Sigmoid colon (tissue), 7 donors: ENCODE measurements at regions of chr19 and their contacts with region 1.

Region 1: DNA sequence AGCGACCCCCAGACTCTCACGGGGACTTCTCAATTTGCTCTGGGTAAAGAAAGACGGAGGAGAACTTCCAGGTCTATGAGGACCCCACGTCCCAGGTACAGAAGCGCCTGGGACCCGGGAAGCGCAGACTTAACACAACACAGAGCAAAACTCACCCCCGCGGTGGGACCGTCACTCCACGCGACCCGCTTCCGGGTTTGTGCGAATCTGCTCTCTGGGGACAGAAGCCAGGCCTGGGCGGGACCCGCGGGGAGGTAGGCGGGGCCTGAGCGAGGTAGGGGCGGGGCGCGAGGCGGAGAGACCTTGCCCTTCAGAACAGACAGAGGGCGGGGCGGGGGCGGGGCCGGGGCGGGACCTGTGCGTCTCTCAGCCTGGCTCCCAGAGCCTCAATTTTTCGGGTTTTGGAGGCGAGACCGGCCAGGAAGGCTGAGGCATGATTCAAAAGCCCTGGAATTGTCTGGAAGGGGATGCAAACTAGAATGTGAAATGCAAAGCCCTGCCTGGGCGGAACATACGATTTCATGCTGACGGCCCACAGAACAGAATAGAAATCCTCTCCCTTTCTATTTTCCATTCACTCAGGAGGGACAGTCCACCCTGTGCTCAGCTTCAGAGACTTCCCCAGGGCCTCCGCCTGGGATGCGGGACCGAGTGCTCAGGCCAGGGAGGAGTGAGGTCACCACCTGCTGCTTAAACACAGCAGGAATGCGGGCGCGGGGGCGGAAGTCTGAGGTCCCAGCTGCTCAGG is 19.3 kb upstream of the ZNF888 start:
- DNase-seq: peak; percentile 97
- H3K4me3 ChIP-seq: peak overlapping the region; percentile 63 to 81 (median 69)
- H3K27ac ChIP-seq: peak overlapping the region; percentile 84 to 88 (median 86)
- H3K4me1 ChIP-seq: peaks cover 0 to 13% (median 8%) of the 10 kb centered on the region in 4 donors
- H3K27me3 ChIP-seq: no peaks in the 10 kb centered on the region
- CTCF ChIP-seq: no peak
- EP300 ChIP-seq: no peak
- POLR2A ChIP-seq: peak; percentile 76 to 88

Region 2: GRCh38 chr19:52897144-52897935 is 45.2 kb before region 1 on chr19 and contains the start of gene ZNF320:
- intact Hi-C with region 1: loop called (anchors 5 kb)
- DNase-seq: peak; percentile 98
- H3K4me3 ChIP-seq: peak within 1 kb of the TSS; percentile 61 to 81 (median 72)
- H3K27ac ChIP-seq: peak within 1 kb of the TSS; percentile 87 to 96 (median 92)
- H3K4me1 ChIP-seq: peaks cover 0 to 19% (median 17%) of the 10 kb centered on the region in 4 donors
- H3K27me3 ChIP-seq: no peaks in the 10 kb centered on the region
- CTCF ChIP-seq: no peak
- EP300 ChIP-seq: no peak
- POLR2A ChIP-seq: peak; percentile 33 to 73
- total RNA-seq, gene ZNF320: 9.0 to 21.8 (median 15.0) TPM

Region 3: DNA sequence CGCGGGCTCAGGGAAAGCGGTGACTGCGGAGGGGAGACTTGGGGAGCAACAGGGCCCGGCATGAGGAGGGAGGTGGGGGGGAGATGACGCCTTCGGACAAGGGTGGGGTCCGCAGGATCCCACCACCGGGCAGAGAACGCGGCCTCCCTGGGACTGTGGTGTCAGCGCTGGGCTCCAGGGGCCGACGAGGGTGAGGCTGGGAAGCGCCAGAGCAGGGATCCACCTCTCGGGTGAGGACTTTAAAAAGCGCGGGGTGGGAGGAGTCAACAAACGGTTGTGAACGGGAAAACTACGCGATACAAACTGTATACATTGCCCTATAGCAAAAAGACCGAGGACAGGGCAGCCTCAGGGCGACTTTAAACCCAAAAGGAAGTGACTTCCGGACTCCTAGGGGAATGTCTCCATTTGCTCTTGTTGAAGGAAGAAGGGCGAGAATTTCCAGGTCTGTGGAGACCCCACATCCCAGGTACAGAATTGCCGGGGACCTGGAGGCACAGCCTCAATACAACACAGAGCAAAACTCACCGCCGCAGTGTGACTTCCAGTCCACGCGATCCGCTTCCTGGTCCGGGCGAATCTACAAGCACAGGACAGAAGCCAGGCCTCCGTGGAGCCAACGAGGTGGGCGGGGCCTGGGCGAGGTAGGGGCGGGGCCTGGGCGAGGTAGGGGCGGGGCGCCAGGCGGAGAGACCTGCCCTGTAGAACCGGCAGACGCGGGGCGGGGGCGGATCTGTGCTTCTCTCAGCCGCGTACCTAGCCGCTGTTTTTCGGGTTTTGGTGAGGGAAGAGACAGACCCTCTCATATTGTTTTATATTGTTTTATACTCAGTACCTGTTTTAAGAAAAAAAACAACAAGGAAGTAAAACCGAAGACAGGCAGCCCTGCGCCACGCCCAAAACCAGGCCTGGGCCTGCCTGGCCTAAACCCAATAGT is 19.5 kb before region 1 on chr19 and contains the start of gene ZNF888:
- intact Hi-C with region 1: loop called (anchors 1 kb)
- DNase-seq: peak; percentile 94
- H3K4me3 ChIP-seq: peak within 1 kb of the TSS; percentile 53 to 71 (median 60)
- H3K27ac ChIP-seq: peak within 1 kb of the TSS; percentile 79 to 91 (median 86)
- H3K4me1 ChIP-seq: peaks cover 0 to 17% (median 7%) of the 10 kb centered on the region in 4 donors
- H3K27me3 ChIP-seq: no peaks in the 10 kb centered on the region
- CTCF ChIP-seq: no peak
- EP300 ChIP-seq: no peak
- POLR2A ChIP-seq: peak in 1 of 2 donors; percentile 61
- total RNA-seq, gene ZNF888: 1.8 to 3.9 (median 3.6) TPM

Region 4: DNA sequence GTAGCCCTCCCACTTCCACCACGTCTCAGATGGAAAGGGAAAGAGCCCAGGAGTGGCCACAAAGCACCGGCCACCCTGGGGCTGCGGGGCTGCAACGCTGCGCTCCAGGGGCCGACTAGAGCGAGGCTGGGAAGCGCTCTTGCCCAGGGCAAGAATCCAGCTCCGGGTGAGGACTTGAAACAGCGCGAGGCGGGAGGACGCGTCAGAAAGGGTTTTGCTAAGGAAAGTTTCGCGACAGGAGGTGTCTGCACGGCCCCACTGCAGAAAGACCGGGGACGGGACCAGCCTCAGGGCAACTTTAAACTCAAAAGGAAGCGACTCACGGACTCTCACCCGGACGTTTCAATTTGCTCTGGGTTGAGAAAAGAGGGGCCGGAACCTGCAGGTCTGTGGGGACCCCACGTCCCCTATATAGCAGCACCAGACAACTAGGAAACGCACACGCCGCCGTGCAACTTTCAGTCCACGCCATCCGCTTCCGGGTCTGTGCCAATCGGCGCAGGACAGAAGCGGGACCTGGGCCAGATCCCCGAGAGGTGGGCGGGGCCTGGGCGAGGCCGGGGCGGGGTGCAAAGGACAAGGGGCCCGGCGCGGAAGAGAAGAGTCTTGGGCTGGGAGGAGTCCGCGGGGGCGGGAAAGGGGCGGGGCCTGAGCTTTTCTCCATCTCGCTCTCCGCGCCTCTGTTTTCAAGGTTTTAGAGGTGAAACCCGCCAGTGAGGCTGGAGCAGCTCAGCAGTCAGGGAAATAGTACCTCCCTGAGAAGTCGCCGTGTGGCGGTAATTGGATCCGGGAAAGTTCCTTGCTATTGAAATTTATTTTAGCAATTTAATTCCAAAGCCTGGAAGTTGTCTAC is 20.1 kb after region 1 on chr19 and contains the start of gene ZNF816:
- intact Hi-C with region 1: loop called (anchors 1 kb)
- DNase-seq: peak; percentile 99
- H3K4me3 ChIP-seq: peak within 1 kb of the TSS; percentile 52 to 73 (median 62)
- H3K27ac ChIP-seq: peak within 1 kb of the TSS; percentile 85 to 87 (median 86)
- H3K4me1 ChIP-seq: peaks cover 0 to 18% (median 12%) of the 10 kb centered on the region in 4 donors
- H3K27me3 ChIP-seq: no peaks in the 10 kb centered on the region
- CTCF ChIP-seq: no peak
- EP300 ChIP-seq: no peak
- POLR2A ChIP-seq: peak in 1 of 2 donors; percentile 52
- total RNA-seq, gene ZNF816: 3.6 to 8.4 (median 6.1) TPM